ENCODE measurements at regions of chr11 and their contacts with region 1.

Region 1: GRCh38 chr11:33542921-33543320 is 157.7 kb downstream of the C11orf91 start:
- DNase-seq: peak; percentile 40
- ATAC-seq: peak; percentile 59; the same call in 1 of the 2 replicates
- H3K4me3 ChIP-seq: no peak overlapping the region
- H3K27ac ChIP-seq: no peak overlapping the region
- H3K4me1 ChIP-seq: peaks cover 2% of the 10 kb centered on the region; the same call in 1 of the 2 replicates
- H3K27me3 ChIP-seq: no peaks in the 10 kb centered on the region
- CTCF ChIP-seq: peak; percentile 61
- POLR2A ChIP-seq: no peak
- RAD21 ChIP-seq: peak; percentile 66

Region 2: DNA sequence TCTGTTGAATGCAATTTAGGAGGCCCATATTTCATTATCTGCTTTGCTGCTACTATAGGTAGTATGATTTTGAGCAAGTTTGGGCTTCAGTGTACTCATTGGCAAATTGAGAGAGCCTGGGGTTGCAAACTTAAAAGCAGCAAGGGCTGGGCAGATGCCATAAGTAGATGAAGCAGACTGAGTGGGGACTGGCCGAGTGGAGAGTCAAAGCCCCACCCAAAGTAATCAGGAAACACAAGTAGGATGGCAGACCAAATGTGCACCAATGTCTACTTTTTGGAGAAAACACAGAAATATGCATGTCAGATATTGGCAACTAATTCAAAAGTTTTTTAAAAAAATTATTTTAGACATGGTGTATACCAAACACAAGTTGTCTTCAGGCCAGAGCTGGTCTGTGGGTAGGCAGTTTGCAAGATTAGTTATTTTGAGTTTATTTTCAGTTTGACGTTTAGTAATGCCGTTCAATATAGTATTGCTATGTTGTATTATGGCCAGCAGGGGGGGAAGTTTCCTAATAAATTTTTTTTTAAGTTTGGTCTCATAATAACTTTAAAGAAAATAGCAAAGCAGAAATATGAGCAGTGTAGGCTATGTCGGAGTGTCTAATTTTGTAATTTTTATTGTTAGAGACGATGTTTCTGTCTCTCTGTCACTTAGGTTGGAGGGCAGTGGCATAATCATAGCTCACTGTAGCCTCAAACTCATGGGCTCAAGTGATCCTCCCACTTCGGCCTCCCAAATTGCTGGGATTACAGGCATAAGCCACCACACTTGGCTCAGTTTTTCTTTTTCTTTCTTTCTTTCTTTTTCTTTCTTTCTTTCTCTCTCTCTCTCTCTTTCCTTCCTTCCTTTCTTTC is 180.6 kb before region 1 on chr11:
- CTCF ChIA-PET with region 1: no interaction called
- POLR2A ChIA-PET with region 1: no interaction called
- dilution Hi-C with region 1: no loop called
- in situ Hi-C with region 1: no loop called
- intact Hi-C with region 1: loop called (anchors 5 kb)
- DNase-seq: peak; percentile 56
- ATAC-seq: peak; percentile 74
- H3K4me3 ChIP-seq: no peak overlapping the region
- H3K27ac ChIP-seq: no peak overlapping the region
- H3K4me1 ChIP-seq: no peaks in the 10 kb centered on the region; the same call in 1 of the 2 replicates
- H3K27me3 ChIP-seq: no peaks in the 10 kb centered on the region
- CTCF ChIP-seq: peak; percentile 76
- POLR2A ChIP-seq: no peak
- RAD21 ChIP-seq: peak; percentile 66

Region 3: DNA sequence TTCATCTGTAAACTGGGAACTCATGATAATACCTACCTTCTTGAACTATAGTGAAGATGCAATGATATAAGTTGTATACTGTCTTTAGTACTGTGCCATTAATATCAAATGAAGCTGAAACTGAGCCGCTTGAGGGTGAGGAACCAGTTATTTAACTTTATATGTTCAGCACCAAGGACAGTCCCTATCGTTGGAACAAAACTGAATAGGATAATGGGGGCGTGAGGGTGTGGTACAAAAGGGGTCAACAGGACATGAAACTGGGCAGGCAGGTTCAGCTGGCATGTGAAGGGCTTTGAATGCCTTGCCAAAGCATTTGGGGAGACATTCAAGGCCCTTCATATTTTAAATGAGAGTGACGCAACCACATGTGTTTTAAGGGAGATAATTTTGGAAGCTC is 45.2 kb after region 1 on chr11:
- CTCF ChIA-PET with region 1: no interaction called
- POLR2A ChIA-PET with region 1: no interaction called
- dilution Hi-C with region 1: no loop called
- in situ Hi-C with region 1: no loop called
- intact Hi-C with region 1: no loop called
- DNase-seq: no peak
- ATAC-seq: no peak
- H3K4me3 ChIP-seq: no peak overlapping the region
- H3K27ac ChIP-seq: no peak overlapping the region
- H3K4me1 ChIP-seq: no peaks in the 10 kb centered on the region
- H3K27me3 ChIP-seq: no peaks in the 10 kb centered on the region
- CTCF ChIP-seq: no peak
- POLR2A ChIP-seq: no peak
- RAD21 ChIP-seq: no peak

Measured in IMR-90 (cell line).